GM12878 (cell line): ENCODE measurements at regions of chr9 and their contacts with region 1.

Region 1: GRCh38 chr9:123629531-123629930 is 273.5 kb downstream of the CRB2 start:
- DNase-seq: no peak
- ATAC-seq: no peak
- H3K4me3 ChIP-seq: no peak overlapping the region
- H3K27ac ChIP-seq: no peak overlapping the region
- H3K4me1 ChIP-seq: no peaks in the 10 kb centered on the region
- H3K27me3 ChIP-seq: no peaks in the 10 kb centered on the region
- CTCF ChIP-seq: no peak
- EP300 ChIP-seq: no peak
- POLR2A ChIP-seq: no peak
- RAD21 ChIP-seq: no peak

Region 2: DNA sequence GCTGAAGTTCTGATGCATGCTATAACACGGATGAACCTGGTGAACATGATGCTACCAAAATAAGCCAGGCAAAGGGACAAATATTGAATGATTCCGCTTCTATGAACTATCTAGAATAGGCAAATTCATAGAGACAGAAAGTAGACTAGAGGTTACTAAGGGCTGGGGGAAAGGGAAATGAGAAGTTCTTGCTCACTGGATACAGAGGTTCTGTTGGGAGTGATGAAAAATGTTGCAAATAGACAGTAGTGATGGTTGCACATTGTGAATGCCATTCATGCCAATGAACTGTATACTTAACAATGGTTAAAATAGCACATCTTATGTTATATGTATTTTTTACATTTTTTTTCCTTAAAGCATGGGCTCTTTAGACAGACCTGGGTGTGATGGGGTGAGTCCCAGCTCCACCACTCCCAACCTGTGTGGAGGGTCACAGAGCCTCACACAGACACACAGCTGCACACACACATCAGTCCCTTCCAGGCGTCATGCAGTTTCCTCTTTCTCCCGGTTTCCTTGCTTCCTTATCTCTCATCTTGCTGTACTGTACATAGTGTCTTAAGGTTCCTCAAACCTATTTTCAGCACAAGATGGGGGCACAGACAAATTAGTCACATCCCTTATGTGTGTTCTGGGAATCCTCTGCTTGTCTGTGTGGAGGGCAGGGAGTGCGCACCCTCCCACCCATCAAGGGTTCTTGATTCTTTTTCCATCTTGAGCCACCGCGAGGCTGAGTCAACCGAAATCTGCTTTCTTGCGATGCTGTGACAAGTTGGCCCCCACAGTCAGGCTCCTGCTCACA is 80.6 kb before region 1 on chr9:
- CTCF ChIA-PET with region 1: no interaction called
- POLR2A ChIA-PET with region 1: no interaction called
- RAD21 ChIA-PET with region 1: no interaction called
- SMC1A ChIA-PET with region 1: no interaction called
- in situ Hi-C with region 1: no loop called
- intact Hi-C with region 1: no loop called
- DNase-seq: no peak
- ATAC-seq: no peak
- H3K4me3 ChIP-seq: no peak overlapping the region
- H3K27ac ChIP-seq: no peak overlapping the region
- H3K4me1 ChIP-seq: no peaks in the 10 kb centered on the region
- H3K27me3 ChIP-seq: no peaks in the 10 kb centered on the region
- CTCF ChIP-seq: no peak
- EP300 ChIP-seq: no peak
- POLR2A ChIP-seq: no peak
- RAD21 ChIP-seq: no peak

Region 3: DNA sequence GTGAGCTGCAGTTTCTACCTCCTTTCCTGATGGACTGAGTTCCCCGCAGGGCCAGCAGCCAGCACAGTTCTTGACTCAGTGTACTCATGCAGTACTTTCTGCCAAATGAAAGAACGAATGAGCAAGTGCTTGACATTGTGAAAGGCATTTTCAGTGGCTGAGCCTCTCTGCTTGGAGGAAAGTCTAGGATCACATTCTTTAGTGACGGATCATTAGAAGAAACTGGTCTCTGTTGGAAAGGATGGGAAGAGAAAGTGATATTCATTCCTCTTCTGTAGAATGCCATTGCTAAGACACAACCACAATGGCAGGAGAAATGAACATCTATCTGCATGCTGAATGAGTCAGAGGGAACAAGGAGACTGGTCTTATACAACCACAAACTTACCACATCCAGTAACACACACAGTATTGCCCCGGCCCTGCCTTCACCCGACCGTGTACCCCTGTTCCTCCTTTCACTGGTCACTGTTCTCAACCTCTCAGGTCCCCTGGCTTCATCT is 66.6 kb before region 1 on chr9:
- CTCF ChIA-PET with region 1: no interaction called
- POLR2A ChIA-PET with region 1: interaction called, 11 read pairs
- RAD21 ChIA-PET with region 1: no interaction called
- SMC1A ChIA-PET with region 1: no interaction called
- in situ Hi-C with region 1: no loop called
- intact Hi-C with region 1: no loop called
- DNase-seq: peak; percentile 34
- ATAC-seq: peak; percentile 97
- H3K4me3 ChIP-seq: no peak overlapping the region
- H3K27ac ChIP-seq: no peak overlapping the region
- H3K4me1 ChIP-seq: peaks cover 15% of the 10 kb centered on the region
- H3K27me3 ChIP-seq: no peaks in the 10 kb centered on the region
- CTCF ChIP-seq: no peak
- EP300 ChIP-seq: no peak
- POLR2A ChIP-seq: no peak
- RAD21 ChIP-seq: no peak